Activated naive CD4-positive, alpha-beta T cell treated with anti-CD3 and anti-CD28 coated beads for 36 hours (primary cell): ENCODE measurements at regions of chr6 and their contacts with region 1.

Region 1: GRCh38 chr6:75208298-75209183 is 2.7 kb upstream of the COL12A1 start:
- DNase-seq: peak; percentile 91
- H3K4me3 Mint-ChIP-seq: peak overlapping the region; percentile 48
- H3K27ac Mint-ChIP-seq: no peak overlapping the region
- H3K4me1 Mint-ChIP-seq: peaks cover 51% of the 10 kb centered on the region
- H3K27me3 Mint-ChIP-seq: peaks cover 68% of the 10 kb centered on the region

Region 2: DNA sequence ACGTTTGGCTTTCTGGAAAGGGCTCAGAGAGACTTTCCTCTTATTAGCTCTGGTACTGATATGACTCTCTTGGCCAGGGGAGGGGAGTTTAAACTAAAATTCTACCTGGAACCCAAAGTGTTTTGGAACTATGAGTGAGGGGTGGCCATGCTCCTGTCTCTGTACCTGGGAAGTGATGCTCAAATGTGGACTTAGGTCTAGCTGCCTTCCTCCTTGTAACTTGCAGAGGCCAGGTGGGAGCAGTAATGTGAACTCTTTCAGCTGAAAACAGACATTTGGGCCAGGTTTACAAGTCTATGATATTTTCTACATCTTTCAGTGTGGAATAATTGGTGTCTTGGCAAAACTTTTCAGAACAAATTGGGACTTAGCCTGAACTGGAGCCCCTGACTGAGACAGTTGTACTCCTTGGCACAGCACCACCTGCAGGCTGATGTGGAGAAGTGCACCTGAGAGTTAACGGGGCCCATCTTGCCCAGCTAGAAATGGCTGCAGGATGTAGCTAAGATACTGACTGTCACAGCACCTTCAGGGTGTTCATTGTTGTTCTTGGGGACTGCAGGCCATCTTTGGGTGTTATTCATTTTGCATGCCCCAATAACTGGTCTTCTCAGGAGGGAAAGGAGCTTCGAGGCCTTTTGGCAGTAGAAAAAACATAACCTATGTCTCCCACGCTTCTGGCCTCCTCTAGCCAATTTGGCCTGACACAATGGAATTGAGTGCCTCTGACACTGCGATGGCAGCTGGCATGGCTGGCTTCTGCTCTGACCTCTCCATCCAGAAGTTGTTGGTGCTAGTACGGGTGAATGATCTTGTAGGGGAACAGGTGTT is 1475.5 kb before region 1 on chr6:
- CTCF ChIA-PET with region 1: interaction called, 19 read pairs
- intact Hi-C with region 1: no loop called
- DNase-seq: peak; percentile 87
- H3K4me3 Mint-ChIP-seq: no peak overlapping the region
- H3K27ac Mint-ChIP-seq: no peak overlapping the region
- H3K4me1 Mint-ChIP-seq: peaks cover 14% of the 10 kb centered on the region
- H3K27me3 Mint-ChIP-seq: no peaks in the 10 kb centered on the region

Region 3: GRCh38 chr6:73969971-73970970 is 1238.3 kb before region 1 on chr6:
- CTCF ChIA-PET with region 1: interaction called, 24 read pairs
- intact Hi-C with region 1: loop called (anchors 1 kb)
- DNase-seq: peak; percentile 9
- H3K4me3 Mint-ChIP-seq: no peak overlapping the region
- H3K27ac Mint-ChIP-seq: no peak overlapping the region
- H3K4me1 Mint-ChIP-seq: no peaks in the 10 kb centered on the region
- H3K27me3 Mint-ChIP-seq: no peaks in the 10 kb centered on the region

Region 4: DNA sequence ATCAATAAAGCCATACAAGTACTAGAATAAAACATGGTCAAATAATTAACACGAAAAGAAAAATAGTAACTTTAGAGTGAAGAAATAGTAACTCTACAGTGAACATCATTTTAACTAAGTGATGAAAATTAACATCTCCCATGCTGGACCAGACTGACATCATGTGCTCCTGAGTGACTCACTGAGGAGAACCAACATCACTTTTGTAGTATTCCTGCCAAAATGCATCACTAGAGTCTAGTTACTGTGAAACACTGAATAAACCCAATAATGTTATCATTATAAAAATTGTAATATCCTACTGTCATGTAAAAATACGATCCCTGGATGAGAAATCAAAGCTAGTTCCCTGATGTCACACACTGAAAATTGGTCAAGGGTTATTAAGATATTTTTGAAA is 1151.2 kb before region 1 on chr6:
- CTCF ChIA-PET with region 1: no interaction called
- intact Hi-C with region 1: no loop called
- DNase-seq: no peak
- H3K4me3 Mint-ChIP-seq: no peak overlapping the region
- H3K27ac Mint-ChIP-seq: no peak overlapping the region
- H3K4me1 Mint-ChIP-seq: no peaks in the 10 kb centered on the region
- H3K27me3 Mint-ChIP-seq: no peaks in the 10 kb centered on the region

Region 5: GRCh38 chr6:74343804-74344203 is 864.7 kb before region 1 on chr6:
- CTCF ChIA-PET with region 1: no interaction called
- intact Hi-C with region 1: loop called (anchors 10 kb)
- DNase-seq: no peak
- H3K4me3 Mint-ChIP-seq: no peak overlapping the region
- H3K27ac Mint-ChIP-seq: no peak overlapping the region
- H3K4me1 Mint-ChIP-seq: no peaks in the 10 kb centered on the region
- H3K27me3 Mint-ChIP-seq: no peaks in the 10 kb centered on the region

Region 6: GRCh38 chr6:74939151-74939708 is 269.3 kb before region 1 on chr6:
- CTCF ChIA-PET with region 1: no interaction called
- intact Hi-C with region 1: loop called (anchors 10 kb)
- DNase-seq: no peak
- H3K4me3 Mint-ChIP-seq: no peak overlapping the region
- H3K27ac Mint-ChIP-seq: no peak overlapping the region
- H3K4me1 Mint-ChIP-seq: no peaks in the 10 kb centered on the region
- H3K27me3 Mint-ChIP-seq: no peaks in the 10 kb centered on the region

Region 7: DNA sequence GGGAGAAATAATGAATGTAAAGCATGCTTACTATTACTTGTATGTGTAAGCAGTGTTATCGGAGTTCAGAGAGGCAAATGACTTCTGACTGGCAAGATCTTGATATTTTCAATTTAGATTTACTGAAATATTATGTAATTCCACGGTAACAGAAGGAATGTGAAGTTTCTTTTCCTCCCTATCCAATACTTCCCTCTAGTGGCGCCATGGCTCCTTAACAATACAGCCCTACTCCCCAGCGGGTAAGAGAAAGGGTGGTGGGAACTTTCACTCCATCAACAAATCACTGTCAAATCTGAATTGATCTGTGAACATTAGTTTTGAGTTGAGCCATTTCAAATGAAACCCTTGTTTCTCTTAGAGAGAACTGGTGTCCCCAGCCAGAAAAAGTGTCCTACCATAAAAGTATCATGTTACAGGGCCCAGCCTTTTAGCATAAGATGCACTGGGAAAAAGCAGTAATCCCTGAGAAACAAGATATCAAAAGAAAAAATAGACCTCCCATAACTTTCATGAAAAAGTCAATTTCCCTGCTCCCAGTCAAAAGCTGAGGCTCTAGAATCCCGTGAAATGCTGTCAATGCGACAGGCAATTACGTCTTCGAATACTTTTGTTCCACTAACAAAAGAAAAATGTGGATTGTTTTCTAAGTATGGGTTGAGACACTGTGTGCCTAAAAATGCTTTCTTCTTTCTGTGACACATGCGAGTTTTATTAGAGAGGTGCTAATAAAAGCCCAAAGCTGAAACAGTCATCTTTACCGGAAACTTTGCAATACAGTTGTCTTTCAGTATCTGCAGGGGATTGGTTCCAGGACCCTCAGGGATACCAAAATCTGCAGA is 22.2 kb after region 1 on chr6:
- CTCF ChIA-PET with region 1: interaction called, 15 read pairs
- intact Hi-C with region 1: no loop called
- DNase-seq: peak; percentile 16
- H3K4me3 Mint-ChIP-seq: no peak overlapping the region
- H3K27ac Mint-ChIP-seq: no peak overlapping the region
- H3K4me1 Mint-ChIP-seq: no peaks in the 10 kb centered on the region
- H3K27me3 Mint-ChIP-seq: no peaks in the 10 kb centered on the region

Region 8: GRCh38 chr6:75368151-75368779 is 159.7 kb after region 1 on chr6:
- CTCF ChIA-PET with region 1: no interaction called
- intact Hi-C with region 1: no loop called
- DNase-seq: peak; percentile 19
- H3K4me3 Mint-ChIP-seq: no peak overlapping the region
- H3K27ac Mint-ChIP-seq: no peak overlapping the region
- H3K4me1 Mint-ChIP-seq: no peaks in the 10 kb centered on the region
- H3K27me3 Mint-ChIP-seq: peaks cover 5% of the 10 kb centered on the region